ENCODE measurements at regions of chr12 and their contacts with region 1.

Region 1: GRCh38 chr12:27940756-27941402 is 31.7 kb downstream of the PTHLH start:
- DNase-seq: peak in 1 of 2 donors; percentile 36
- ATAC-seq: no peak
- H3K4me3 ChIP-seq: no peak overlapping the region
- H3K27ac ChIP-seq: no peak overlapping the region
- H3K4me1 ChIP-seq: no peaks in the 10 kb centered on the region
- H3K27me3 ChIP-seq: no peaks in the 10 kb centered on the region
- CTCF ChIP-seq: peak in 4 of 5 experiments; percentile 10 to 58 (median 50)
- POLR2A ChIP-seq: no peak

Region 2: DNA sequence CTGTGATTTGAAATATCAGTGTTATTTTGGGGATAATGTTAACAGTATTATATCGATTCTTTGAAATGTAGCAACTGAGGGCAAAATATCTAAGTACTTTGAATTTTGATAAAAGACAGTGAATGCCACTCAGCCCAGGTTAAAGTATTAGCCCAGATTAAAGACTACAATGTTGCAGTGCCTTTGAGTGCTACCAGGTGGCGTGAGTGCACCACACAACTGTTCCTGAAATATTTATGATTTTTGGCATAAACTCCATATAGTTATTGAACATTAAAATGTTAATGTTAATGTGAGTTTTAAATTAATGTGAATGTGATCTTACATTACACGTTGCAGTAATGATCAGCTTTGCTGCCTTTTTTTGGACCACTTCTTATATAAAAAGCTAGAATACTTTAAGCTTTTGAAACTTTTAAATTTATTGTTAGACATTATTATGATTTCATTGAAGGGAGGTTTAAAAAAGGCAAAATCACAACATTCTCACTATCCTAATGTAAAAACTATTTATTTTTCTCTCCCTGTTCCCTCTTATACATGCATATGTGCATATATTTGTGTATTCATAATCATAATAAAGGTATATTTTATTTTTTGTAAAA is 207.7 kb before region 1 on chr12:
- in situ Hi-C with region 1: loop called in 2 of 4 experiments (anchors 25 kb)
- intact Hi-C with region 1: loop called (anchors 2 kb)
- DNase-seq: no peak
- ATAC-seq: no peak
- H3K4me3 ChIP-seq: no peak overlapping the region
- H3K27ac ChIP-seq: no peak overlapping the region
- H3K4me1 ChIP-seq: no peaks in the 10 kb centered on the region
- H3K27me3 ChIP-seq: no peaks in the 10 kb centered on the region
- CTCF ChIP-seq: peak; percentile 38 to 67 (median 51)
- POLR2A ChIP-seq: no peak

Region 3: GRCh38 chr12:27747111-27747820 is 193.6 kb before region 1 on chr12:
- in situ Hi-C with region 1: loop called in 3 of 4 experiments (anchors 10 to 25 kb)
- intact Hi-C with region 1: no loop called
- DNase-seq: no peak
- ATAC-seq: peak; percentile 86 to 95
- H3K4me3 ChIP-seq: no peak overlapping the region
- H3K27ac ChIP-seq: peak overlapping the region; percentile 68 to 85 (median 82)
- H3K4me1 ChIP-seq: peaks cover 6 to 14% of the 10 kb centered on the region in 2 donors
- H3K27me3 ChIP-seq: no peaks in the 10 kb centered on the region
- CTCF ChIP-seq: no peak
- POLR2A ChIP-seq: no peak

Region 4: DNA sequence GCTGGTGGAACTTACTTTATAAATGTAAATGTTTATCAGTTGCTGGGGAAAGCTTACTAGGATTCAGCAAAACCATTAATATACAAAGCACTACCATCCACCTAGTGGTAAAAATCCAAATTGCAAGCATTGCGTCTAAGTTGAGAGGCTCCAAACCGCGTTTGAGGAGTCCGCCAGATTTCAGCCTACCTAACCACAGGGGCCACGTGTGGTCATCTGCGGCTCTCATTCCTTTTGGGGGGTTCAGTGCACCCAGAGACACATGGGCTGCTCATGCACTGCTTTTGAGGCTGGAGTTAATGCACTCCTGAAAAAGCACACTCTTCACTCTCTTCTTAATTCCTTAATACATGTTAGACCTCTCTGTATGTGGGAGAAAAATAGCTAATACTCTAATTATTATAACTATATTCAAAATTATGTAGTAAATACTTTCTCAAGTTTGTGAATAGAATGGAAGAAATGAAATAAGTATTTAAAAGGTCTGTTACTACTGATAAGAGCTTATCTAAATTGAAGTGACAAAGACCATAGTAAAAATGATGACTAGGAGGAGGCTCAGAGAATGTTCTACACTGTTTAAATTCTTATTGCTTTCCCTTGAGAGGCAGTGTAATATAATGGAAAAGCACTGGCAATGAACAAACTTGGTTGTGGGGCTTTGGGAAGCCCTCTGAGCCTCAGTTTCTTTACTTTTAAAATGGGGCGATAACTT is 119.5 kb before region 1 on chr12:
- in situ Hi-C with region 1: no loop called
- intact Hi-C with region 1: loop called (anchors 5 kb)
- DNase-seq: peak in 1 of 2 donors; percentile 12
- ATAC-seq: peak; percentile 73 to 77
- H3K4me3 ChIP-seq: no peak overlapping the region
- H3K27ac ChIP-seq: no peak overlapping the region
- H3K4me1 ChIP-seq: no peaks in the 10 kb centered on the region
- H3K27me3 ChIP-seq: no peaks in the 10 kb centered on the region
- CTCF ChIP-seq: peak; percentile 53 to 77 (median 59)
- POLR2A ChIP-seq: no peak

Measured in gastrocnemius medialis (tissue), 4 donors.